Activated naive CD4-positive, alpha-beta T cell treated with anti-CD3 and anti-CD28 coated beads for 36 hours (primary cell): ENCODE measurements at regions of chr2 and their contacts with region 1.

Region 1: DNA sequence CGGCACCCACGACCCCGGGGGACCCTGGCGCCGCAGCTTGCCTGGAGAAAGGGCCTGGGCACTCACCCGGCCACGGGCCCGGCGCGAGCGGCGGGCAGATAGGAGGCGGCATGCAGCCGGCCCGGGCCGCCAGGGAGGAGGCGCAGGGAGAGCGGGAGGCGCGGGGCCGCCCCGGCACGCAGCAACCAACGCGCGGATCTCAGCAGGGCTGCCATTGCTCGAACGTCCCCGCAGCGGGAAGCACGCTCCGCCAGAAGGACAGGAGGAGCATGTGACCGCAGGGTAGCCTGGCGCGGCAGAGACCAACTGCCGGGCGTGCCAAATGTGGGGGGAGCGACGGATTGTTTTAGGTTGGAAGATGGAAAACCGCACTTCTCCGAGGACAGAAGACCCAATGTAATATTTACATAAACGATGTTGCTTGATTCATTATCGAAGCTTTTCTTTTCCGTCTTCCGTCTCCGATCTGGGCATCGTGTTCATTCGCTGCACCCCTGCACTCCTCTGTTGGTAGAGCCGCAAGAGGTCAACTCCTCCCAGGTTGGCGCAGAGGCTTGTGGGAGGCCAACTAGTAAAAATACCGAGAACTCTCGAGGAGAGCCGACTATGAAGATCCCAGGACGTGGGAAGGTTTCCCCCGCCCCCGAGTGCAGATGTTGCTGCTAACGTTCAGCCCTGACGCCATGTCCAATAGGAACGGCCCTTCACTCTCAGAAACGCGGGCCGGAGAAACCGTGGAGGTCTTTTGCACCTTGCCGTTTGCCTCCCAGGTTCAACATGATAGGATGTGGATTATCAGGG is at the start of gene LRPPRC:
- DNase-seq: peak; percentile 95
- H3K4me3 Mint-ChIP-seq: peak within 1 kb of the TSS; percentile 89
- H3K27ac Mint-ChIP-seq: peak within 1 kb of the TSS; percentile 93
- H3K4me1 Mint-ChIP-seq: peaks cover 36% of the 10 kb centered on the region
- H3K27me3 Mint-ChIP-seq: no peaks in the 10 kb centered on the region
- total RNA-seq, gene LRPPRC: 170 to 175 TPM

Region 2: DNA sequence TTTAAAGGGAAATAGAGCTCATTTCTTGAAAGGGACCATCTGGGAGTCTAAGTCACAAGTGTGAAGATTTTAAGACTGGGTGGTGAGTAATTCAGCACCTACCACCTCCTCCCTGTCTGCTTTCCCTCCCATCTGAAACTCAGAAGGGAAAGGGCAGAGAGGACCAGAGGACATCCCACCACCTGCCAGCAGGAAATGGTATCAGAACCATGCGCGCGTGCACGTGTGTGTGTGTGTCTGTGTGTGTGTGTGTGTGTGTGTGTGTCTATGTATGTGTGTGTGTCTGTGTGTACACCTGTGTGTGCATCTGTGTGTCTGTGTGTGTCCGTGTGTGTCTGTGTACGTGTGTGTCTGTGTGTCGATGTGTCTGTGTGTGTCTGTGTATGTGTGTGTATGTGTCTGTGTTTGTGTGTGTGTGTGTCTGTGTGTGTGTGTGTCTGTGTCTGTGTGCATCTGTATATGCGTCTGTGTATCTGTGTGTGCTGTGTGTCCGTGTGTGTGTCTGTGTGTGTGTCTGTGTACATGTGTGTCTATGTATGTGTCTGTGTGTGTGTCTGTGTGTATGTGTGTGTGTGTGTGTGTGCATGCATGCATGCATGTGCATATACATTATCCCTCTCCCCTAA is 846.3 kb before region 1 on chr2:
- CTCF ChIA-PET with region 1: no interaction called
- intact Hi-C with region 1: loop called (anchors 5 kb)
- DNase-seq: peak; percentile 90
- H3K4me3 Mint-ChIP-seq: peak overlapping the region; percentile 26
- H3K27ac Mint-ChIP-seq: peak overlapping the region; percentile 62
- H3K4me1 Mint-ChIP-seq: peaks cover 70% of the 10 kb centered on the region
- H3K27me3 Mint-ChIP-seq: no peaks in the 10 kb centered on the region

Region 3: GRCh38 chr2:43169987-43170386 is 825.9 kb before region 1 on chr2:
- CTCF ChIA-PET with region 1: no interaction called
- intact Hi-C with region 1: no loop called
- DNase-seq: peak; percentile 89
- H3K4me3 Mint-ChIP-seq: peak overlapping the region; percentile 42
- H3K27ac Mint-ChIP-seq: peak overlapping the region; percentile 61
- H3K4me1 Mint-ChIP-seq: peaks cover 81% of the 10 kb centered on the region
- H3K27me3 Mint-ChIP-seq: no peaks in the 10 kb centered on the region

Region 4: GRCh38 chr2:43293744-43294695 is 701.9 kb before region 1 on chr2:
- CTCF ChIA-PET with region 1: no interaction called
- intact Hi-C with region 1: loop called (anchors 5 kb)
- DNase-seq: peak; percentile 77
- H3K4me3 Mint-ChIP-seq: no peak overlapping the region
- H3K27ac Mint-ChIP-seq: peak overlapping the region; percentile 81
- H3K4me1 Mint-ChIP-seq: peaks cover 29% of the 10 kb centered on the region
- H3K27me3 Mint-ChIP-seq: no peaks in the 10 kb centered on the region

Region 5: DNA sequence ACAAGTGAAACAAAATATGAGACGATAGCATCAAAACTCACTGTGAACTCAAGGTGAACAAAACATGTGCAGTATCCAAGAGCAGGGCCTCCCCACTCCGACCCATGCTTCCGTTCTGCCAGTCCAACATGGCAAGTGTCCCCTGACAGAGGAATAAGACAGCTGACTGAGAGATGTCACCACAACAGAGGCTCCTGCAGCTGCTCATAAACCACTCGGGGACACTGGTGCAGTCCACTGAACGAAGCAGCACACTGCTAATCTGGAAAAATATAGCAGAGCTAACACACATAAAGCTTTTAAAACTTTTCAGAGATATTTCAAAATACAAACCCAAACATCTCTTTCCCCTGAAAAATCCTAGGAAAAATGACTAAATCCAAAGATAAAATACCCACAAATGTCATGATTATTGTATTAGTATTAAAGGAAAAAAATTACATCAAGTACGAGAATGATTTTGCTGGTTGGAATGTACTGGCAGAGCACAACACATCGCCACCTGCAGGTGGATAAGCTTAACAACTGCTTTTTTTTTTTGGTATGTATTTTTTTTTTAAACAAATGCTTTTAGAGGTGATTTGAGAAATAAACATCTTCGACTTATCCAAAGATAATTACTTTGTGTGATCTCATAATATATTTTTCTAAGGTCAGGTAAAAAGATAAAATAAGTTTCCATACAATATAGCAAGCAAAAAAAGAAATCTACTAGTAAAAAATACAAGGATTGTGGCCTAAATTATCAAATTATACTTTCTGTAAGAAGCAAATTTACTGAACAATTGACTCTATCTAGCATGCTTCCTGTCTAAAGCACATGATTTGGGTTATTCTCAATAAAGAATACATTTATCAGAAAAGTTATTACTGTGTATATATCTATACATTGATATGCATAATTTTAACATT is 418.7 kb before region 1 on chr2:
- CTCF ChIA-PET with region 1: no interaction called
- intact Hi-C with region 1: no loop called
- DNase-seq: peak; percentile 38
- H3K4me3 Mint-ChIP-seq: no peak overlapping the region
- H3K27ac Mint-ChIP-seq: no peak overlapping the region
- H3K4me1 Mint-ChIP-seq: peaks cover 7% of the 10 kb centered on the region
- H3K27me3 Mint-ChIP-seq: no peaks in the 10 kb centered on the region

Region 6: DNA sequence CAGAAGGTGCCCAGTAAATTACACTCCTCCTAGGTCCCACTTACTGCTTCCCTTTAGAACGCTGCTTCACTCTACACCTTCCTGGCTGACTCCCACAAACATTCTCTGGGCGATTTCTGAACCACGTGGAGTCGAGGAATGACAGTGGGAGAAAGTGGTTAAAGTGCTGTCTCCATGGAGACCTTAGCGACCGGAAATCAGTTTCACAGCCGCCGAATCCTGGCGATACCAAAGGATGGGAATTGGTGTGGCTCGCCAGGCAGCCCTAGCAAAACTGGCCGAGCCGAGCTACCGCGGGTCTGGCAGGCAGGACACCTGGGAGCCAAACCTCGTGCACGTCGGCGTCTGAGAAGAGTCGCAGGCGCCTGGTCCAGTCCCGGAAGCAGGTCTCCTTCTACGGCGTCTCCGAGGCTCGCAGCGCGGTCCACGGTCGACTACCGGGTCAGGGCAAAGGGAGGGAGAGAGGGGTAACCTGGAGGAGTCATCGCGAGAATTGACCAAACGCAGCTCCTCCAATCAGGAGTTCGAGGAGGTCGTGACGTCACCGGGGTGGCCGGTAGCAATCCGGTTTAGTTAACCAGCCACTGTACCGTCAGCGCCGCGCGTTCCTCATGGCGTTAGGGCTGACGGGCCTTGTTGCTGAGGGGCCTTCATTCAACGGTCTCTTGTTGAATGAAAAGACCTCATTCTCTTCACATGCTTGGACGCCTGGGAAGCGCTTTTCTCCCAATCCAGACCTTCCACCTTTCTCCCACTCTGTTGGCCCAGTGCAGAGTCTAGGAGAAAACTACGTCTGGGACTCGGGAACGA is 400.1 kb before region 1 on chr2 and contains the start of gene THADA:
- CTCF ChIA-PET with region 1: no interaction called
- intact Hi-C with region 1: loop called (anchors 5 kb)
- DNase-seq: peak; percentile 99
- H3K4me3 Mint-ChIP-seq: peak within 1 kb of the TSS; percentile 94
- H3K27ac Mint-ChIP-seq: peak within 1 kb of the TSS; percentile 96
- H3K4me1 Mint-ChIP-seq: peaks cover 31% of the 10 kb centered on the region
- H3K27me3 Mint-ChIP-seq: no peaks in the 10 kb centered on the region
- total RNA-seq, gene THADA: 28.6 to 31.5 TPM

Region 7: GRCh38 chr2:43637030-43637803 is 358.7 kb before region 1 on chr2 and contains the start of gene PLEKHH2:
- CTCF ChIA-PET with region 1: no interaction called
- intact Hi-C with region 1: loop called (anchors 2 kb)
- DNase-seq: peak; percentile 92
- H3K4me3 Mint-ChIP-seq: peak within 1 kb of the TSS; percentile 79
- H3K27ac Mint-ChIP-seq: no peak within 1 kb of the TSS
- H3K4me1 Mint-ChIP-seq: peaks cover 5% of the 10 kb centered on the region
- H3K27me3 Mint-ChIP-seq: peaks cover 19% of the 10 kb centered on the region
- total RNA-seq, gene PLEKHH2: 0.64 to 0.72 TPM

Region 8: DNA sequence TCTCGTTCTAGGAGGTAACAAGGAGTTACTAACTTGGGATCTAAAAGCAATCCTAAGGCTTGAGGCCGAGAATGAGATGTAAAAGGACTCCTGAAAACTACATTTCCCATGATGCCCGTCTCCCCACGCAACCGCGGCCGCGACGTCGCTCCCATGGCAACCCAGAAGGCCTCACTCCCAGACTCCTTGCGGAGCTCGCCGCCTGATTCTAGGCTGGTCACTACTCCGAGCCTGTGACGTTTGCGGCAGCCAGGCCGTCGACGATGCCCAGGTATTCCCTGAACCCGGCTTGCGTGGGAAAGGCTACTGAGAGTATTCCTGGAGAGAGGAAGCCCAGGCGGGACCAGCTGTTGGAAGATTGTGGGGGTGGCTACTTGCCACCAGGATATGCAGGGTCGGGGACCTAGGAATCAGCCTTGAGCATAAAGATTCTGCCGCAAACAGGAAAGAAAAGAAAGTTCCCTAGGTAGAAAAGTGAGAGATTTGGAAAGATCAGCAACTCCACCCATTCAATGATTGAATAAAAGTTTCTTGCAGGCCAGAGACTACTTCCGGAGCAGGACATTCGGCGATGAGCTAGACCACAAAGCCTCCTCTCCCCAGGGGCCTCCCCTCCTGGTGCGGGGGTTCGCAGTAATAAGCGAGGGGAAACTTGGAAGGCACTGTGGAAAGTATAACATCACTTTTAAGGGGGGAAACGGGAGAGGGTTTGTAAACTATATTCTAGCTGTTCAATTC is 221.9 kb before region 1 on chr2 and contains the start of gene DYNC2LI1:
- CTCF ChIA-PET with region 1: no interaction called
- intact Hi-C with region 1: loop called (anchors 10 kb)
- DNase-seq: peak; percentile 90
- H3K4me3 Mint-ChIP-seq: peak within 1 kb of the TSS; percentile 91
- H3K27ac Mint-ChIP-seq: peak within 1 kb of the TSS; percentile 79
- H3K4me1 Mint-ChIP-seq: peaks cover 21% of the 10 kb centered on the region
- H3K27me3 Mint-ChIP-seq: no peaks in the 10 kb centered on the region
- total RNA-seq, gene DYNC2LI1: 8.0 to 8.9 TPM

Region 9: DNA sequence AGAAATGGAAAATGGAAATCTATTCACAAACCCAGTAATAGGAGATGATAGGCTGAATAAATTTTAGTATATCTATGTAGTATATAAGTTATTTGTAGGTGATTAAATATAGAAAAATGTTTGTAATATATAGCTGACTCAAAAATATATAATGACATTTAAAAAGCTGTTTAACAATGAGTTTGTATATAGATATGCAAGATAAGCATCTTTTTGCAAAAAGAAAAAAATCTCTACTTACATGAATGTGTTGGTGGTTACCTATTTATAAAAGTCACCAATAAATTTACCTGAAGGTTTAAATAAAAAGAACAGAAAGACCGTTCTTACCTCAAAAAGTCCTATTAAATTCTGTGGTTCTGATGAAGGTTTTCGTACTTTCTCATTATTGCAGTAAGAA is 71.5 kb before region 1 on chr2:
- CTCF ChIA-PET with region 1: no interaction called
- intact Hi-C with region 1: no loop called
- DNase-seq: no peak
- H3K4me3 Mint-ChIP-seq: no peak overlapping the region
- H3K27ac Mint-ChIP-seq: no peak overlapping the region
- H3K4me1 Mint-ChIP-seq: peaks cover 6% of the 10 kb centered on the region
- H3K27me3 Mint-ChIP-seq: no peaks in the 10 kb centered on the region

Region 10: DNA sequence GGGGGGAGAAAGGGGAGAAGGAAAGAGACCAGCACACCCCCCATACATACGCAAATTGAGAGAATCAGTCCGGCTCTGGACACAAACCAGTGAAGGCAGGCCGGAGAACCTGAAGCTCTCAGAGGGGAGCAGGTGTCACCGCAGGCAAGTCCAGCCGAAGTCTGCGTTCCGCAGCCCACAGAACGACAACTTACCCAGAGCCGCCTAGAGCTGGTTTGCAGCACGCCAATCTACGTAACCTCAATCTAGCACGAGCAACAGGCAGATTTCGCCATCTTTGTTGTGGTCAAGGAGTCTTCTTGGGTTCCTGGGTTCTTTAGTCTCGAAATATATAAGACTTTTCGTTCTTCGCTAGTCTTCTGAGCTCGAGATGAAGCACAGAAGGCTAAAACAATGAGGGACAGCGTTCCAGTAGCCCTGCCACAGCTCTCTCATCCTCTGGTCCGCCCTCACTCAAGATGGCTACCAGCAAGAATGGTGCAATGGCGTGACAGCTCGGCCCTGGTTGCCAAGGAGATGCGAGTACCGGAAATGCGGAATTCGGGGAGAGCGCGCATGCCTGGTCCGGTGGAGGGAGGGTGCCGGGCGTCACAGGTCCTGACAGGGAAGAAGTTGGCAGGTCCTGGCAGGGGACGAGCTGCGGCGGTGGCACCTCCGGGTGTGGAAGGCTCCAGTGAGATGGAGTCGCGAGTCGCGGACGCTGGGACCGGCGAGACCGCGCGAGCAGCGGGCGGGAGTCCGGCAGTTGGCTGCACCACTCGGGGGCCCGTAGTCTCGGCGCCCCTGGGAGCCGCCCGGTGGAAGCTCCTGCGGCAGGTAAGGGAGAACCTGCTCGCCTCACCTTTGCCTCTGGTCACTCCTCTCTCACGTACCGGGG is 365.6 kb after region 1 on chr2 and contains the starts of genes CAMKMT and PREPL:
- CTCF ChIA-PET with region 1: no interaction called
- intact Hi-C with region 1: loop called (anchors 1 kb)
- DNase-seq: peak; percentile 99
- H3K4me3 Mint-ChIP-seq: peak within 1 kb of the TSS; percentile 97
- H3K27ac Mint-ChIP-seq: peak within 1 kb of the TSS; percentile 99
- H3K4me1 Mint-ChIP-seq: peaks cover 42% of the 10 kb centered on the region
- H3K27me3 Mint-ChIP-seq: no peaks in the 10 kb centered on the region
- total RNA-seq, gene CAMKMT: 12.8 to 19.6 TPM
- total RNA-seq, gene PREPL: 27.8 to 29.6 TPM